CD14-positive monocyte (primary cell): ENCODE measurements at regions of chr3 and their contacts with region 1.

Region 1: DNA sequence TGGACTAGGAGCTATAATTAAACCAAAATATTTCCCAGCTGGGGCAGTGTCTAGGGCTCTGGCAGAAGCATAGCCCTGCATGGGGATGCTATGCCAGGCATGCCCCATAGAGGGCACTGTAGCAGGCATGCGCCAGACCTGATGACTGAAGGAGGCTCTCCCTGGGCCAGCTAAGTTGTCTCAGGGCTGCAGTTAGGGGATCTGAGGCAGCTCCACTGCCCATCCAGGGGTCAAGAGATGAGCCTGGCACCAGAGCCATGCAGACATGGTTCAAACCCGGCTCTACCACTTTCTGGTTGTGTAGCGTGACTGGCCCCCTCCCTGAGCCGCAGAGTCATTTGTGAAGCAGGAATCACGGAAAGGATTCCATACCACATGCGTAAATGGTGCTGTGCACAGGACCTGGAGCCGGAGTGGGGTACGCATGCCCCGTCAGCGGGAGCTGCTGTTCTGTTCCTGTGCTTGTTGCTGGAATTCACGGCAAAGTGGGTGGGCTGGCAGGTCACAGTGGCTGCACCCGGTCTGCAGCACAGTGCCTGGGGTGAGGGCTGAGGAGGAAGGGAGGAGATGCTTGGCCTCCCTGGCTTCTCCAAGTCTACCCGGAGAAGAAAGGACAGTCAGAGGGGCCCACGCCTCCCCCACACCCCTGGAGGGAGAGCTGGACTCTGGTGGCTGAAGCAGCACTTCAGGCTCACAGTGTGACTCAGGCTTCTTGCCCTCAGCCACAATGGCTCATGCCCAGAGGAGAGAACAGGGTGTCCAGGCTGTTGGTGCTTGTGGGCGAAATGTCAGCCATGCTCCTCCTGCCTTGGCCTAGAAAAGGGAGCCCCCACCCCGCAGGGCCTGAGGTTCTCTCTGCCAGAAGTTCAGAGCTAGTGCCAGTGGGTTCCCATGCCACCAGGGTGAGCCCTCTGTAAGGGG is 43.1 kb downstream of the DNASE1L3 start:
- DNase-seq: peak in 2 of 3 donors; percentile 28
- H3K4me3 ChIP-seq: no peak overlapping the region
- H3K4me3 Mint-ChIP-seq: no peak overlapping the region
- H3K27ac ChIP-seq: no peak overlapping the region
- H3K27ac Mint-ChIP-seq: no peak overlapping the region
- H3K4me1 ChIP-seq: no peaks in the 10 kb centered on the region
- H3K4me1 Mint-ChIP-seq: no peaks in the 10 kb centered on the region
- H3K27me3 ChIP-seq: no peaks in the 10 kb centered on the region
- H3K27me3 Mint-ChIP-seq: peaks cover 0 to under 1% (median 0%) of the 10 kb centered on the region in 3 donors
- CTCF ChIP-seq: peak; percentile 90

Region 2: DNA sequence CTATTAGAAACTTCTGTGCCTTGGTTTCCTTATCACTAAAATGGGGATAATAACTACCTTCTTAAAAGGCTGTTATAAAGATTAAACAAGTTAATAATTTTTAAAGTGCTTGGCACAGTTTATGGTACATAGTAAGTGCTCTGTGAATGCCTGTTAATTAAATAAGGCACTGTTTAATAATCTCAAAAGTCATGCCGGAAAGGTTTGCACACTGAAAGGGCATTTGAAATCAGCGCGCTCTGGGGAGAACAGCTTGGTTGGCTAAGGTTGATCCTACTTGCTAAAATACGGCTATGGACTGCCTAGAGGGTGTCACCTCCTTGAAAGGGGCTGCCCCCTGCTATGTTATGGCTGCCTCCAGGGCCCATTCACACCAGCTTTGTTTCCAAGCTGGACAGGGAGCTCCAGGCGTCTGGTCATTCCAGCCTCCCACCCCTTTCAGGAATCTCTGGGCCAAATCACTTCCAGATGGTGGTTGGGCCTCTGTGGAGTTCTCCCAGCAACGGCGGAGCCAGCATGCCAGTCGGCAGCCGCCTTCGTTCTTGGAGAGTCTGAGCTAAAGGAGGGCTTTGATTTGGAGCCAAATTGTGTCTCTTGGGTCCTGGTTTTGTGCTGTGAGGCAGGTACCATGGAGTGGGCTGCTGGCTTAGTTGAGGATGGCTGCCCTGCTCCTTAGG is 153.6 kb before region 1 on chr3:
- intact Hi-C with region 1: loop called in 1 of 2 experiments (anchors 10 kb)
- DNase-seq: no peak
- H3K4me3 ChIP-seq: no peak overlapping the region
- H3K4me3 Mint-ChIP-seq: no peak overlapping the region
- H3K27ac ChIP-seq: no peak overlapping the region
- H3K27ac Mint-ChIP-seq: no peak overlapping the region
- H3K4me1 ChIP-seq: peaks cover 12 to 13% of the 10 kb centered on the region in 2 donors
- H3K4me1 Mint-ChIP-seq: peaks cover 35% of the 10 kb centered on the region
- H3K27me3 ChIP-seq: no peaks in the 10 kb centered on the region
- H3K27me3 Mint-ChIP-seq: peaks cover 0 to 3% (median 2%) of the 10 kb centered on the region in 3 donors
- CTCF ChIP-seq: no peak

Region 3: DNA sequence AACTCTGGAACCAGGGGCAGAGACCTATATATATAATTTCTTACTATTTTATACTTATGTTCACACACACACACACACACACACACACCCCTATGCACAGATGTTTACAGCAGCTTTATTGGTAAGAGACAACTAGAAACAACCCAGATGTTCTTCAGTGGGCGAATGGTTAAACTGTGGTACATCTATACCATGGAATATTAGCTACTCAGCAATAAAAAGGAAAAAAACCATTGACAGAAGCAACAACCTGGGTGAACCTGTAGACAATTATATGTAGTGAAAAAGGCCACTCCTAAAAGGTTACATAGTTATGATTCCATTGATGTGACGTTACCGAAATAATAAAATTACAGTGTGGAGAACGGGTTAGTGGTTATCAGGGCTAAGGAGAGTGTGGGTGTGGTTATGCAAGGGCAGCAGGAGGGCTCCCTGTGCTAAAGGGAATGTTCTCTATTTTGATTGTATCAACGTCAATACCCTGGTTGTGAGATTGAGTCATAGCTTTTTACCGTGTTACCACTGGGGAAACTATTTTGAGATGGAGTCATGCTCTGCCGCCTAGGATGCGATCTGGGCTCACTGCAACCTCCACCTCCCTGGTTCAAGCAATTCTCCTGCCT is 74.0 kb before region 1 on chr3:
- intact Hi-C with region 1: no loop called
- DNase-seq: no peak
- H3K4me3 ChIP-seq: no peak overlapping the region
- H3K4me3 Mint-ChIP-seq: no peak overlapping the region
- H3K27ac ChIP-seq: no peak overlapping the region
- H3K27ac Mint-ChIP-seq: peak overlapping the region in 1 of 7 donors; percentile 54
- H3K4me1 ChIP-seq: no peaks in the 10 kb centered on the region
- H3K4me1 Mint-ChIP-seq: no peaks in the 10 kb centered on the region
- H3K27me3 ChIP-seq: no peaks in the 10 kb centered on the region
- H3K27me3 Mint-ChIP-seq: no peaks in the 10 kb centered on the region
- CTCF ChIP-seq: no peak

Region 4: GRCh38 chr3:58285334-58285733 is 117.6 kb after region 1 on chr3:
- intact Hi-C with region 1: no loop called
- DNase-seq: no peak
- H3K4me3 ChIP-seq: no peak overlapping the region
- H3K4me3 Mint-ChIP-seq: no peak overlapping the region
- H3K27ac ChIP-seq: no peak overlapping the region
- H3K27ac Mint-ChIP-seq: peak overlapping the region in 1 of 7 donors; percentile 54
- H3K4me1 ChIP-seq: no peaks in the 10 kb centered on the region
- H3K4me1 Mint-ChIP-seq: no peaks in the 10 kb centered on the region
- H3K27me3 ChIP-seq: no peaks in the 10 kb centered on the region
- H3K27me3 Mint-ChIP-seq: no peaks in the 10 kb centered on the region
- CTCF ChIP-seq: no peak